Dorsolateral prefrontal cortex (tissue), 120 donors: ENCODE measurements at regions of chr6 and their contacts with region 1.

Region 1: DNA sequence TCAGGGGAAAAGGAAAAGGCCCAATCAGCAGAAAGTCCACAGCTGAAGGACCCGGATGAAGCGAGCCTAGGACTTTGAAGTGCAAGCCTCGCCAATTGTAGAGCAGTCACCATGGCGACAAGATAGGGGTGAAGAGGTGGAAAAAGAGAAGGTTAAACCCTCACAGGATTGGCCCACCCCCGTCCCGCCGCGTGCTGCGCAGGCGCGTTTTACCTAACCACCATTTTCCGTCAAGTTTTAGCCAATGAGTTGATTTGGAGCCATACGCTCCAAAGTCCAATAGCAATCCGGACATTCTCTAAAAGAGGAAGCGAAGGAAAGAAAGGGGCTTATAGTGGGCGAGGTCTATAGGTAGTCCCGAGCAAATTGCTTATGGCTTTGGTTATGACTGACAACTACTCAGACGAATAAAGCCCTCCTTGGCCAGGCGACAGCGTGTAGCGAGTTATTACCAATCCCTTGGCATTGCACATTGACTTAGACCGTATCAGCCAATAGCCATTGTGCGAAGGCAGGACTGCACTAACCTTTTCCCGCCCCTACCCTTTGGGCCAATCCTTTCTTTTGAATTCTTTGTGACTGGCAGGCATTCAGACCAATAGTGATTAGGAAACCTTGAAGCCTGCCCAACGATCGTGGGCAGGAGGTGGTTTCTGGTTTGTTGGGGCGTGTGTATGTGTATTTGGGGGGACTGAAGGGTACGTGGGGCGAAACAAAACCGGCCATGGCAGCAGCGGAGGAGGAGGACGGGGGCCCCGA is at the start of gene RNF5:
- DNase-seq: peak; percentile 75 to 99 (median 96)
- H3K4me3 ChIP-seq: peak within 1 kb of the TSS; percentile 49 to 98 (median 89)
- H3K27ac ChIP-seq: peak within 1 kb of the TSS; percentile 86 to 100 (median 99)
- H3K27me3 ChIP-seq: no peaks in the 10 kb centered on the region
- CTCF ChIP-seq: peak in 6 of 56 donors; percentile 2 to 23 (median 15)
- total RNA-seq, gene RNF5: 34.1 to 70.5 (median 51.5) TPM

Region 2: GRCh38 chr6:32127717-32128592 is 50.0 kb before region 1 on chr6 and contains the start of gene ATF6B:
- intact Hi-C with region 1: loop called in 1 of 2 experiments (anchors 1 kb)
- DNase-seq: peak; percentile 98 to 100 (median 99)
- H3K4me3 ChIP-seq: peak within 1 kb of the TSS; percentile 60 to 100 (median 93)
- H3K27ac ChIP-seq: peak within 1 kb of the TSS in 57 of 59 donors; percentile 13 to 97 (median 91)
- H3K27me3 ChIP-seq: no peaks in the 10 kb centered on the region
- CTCF ChIP-seq: peak in 16 of 56 donors; percentile 3 to 58 (median 20)
- total RNA-seq, gene ATF6B: 61.3 to 117 (median 80.7) TPM